H1 (cell line): ENCODE measurements at regions of chr16 and their contacts with region 1.

Region 1: GRCh38 chr16:57470683-57471082 is 8.2 kb downstream of the POLR2C start:
- DNase-seq: no peak
- H3K4me3 ChIP-seq: no peak overlapping the region
- H3K27ac ChIP-seq: 0 out of 2 replicates have a peak overlapping the region, but pooled peaks have one; percentile 19
- H3K4me1 ChIP-seq: peaks cover 5 to 30% (median 24%) of the 10 kb centered on the region in 4 experiments
- H3K27me3 ChIP-seq: no peaks in the 10 kb centered on the region
- CTCF ChIP-seq: no peak
- EP300 ChIP-seq: no peak
- POLR2A ChIP-seq: no peak
- RAD21 ChIP-seq: no peak

Region 2: DNA sequence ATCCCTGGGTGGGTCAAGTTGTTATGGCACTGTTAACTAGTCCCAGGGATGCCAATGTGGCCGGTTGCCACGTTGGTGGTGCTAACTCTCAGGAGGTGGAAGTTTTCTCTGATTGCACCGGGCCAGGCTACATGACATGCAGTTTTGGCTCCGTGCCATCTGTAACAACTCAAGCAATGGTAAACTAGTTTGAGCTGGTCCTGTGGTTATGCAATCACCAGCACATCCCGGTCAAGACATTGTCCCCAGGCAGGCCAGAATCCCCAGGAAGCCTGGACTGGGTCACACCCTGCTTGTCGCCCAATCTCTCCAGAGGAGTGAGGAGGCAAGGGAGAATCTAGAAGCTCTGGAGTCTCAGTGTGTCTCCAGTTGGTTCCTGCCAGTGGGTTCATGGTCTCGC is 76.2 kb before region 1 on chr16:
- CTCF ChIA-PET with region 1: no interaction called
- POLR2A ChIA-PET with region 1: no interaction called
- DNase-seq: no peak
- H3K4me3 ChIP-seq: no peak overlapping the region
- H3K27ac ChIP-seq: no peak overlapping the region
- H3K4me1 ChIP-seq: no peaks in the 10 kb centered on the region
- H3K27me3 ChIP-seq: no peaks in the 10 kb centered on the region
- CTCF ChIP-seq: no peak
- EP300 ChIP-seq: no peak
- POLR2A ChIP-seq: no peak
- RAD21 ChIP-seq: no peak

Region 3: DNA sequence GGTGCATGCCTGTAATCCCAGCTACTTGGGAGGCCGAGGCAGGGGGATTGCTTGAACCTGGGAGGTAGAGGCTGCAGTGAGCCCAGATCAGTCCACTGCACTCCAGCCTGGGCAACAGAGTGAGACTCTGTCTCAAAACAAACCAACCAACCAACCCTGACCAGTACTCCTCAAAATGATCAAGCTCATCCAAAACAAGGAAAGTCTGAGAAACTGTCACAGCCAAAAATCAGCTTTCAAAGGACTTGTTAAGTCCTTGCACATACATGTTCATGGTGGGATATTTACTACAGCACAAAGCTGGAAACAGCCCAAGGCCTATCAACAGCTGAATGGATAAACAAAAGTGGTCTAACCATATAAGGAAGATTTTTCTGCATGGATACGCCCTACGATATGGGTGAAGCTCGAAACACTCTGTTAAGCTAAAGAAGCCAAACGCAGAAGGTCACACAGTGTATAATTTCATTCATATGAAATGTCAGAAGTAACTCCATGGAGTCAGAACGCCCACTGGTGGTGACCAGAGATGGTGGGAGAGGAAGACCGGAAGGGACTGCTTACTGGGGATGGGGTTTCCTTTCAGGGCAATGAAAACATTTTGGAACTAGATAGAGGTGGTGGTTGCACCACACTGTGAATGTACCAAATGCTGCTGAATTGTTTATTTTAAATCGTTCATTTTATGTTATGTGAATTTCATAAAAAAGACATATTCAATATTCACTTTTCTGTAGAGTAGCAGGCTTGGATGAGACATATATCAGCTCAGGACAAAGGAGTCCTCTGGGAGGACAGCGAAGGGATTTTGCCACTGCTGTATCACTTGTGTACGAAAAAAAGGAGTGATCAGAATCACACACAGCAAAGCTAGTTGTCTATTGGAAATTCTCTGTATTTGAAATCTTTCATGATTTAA is 48.4 kb before region 1 on chr16:
- CTCF ChIA-PET with region 1: interaction called, 10 read pairs
- POLR2A ChIA-PET with region 1: interaction called, 7 read pairs
- DNase-seq: peak in 1 of 2 experiments; percentile 60
- H3K4me3 ChIP-seq: no peak overlapping the region
- H3K27ac ChIP-seq: no peak overlapping the region
- H3K4me1 ChIP-seq: peaks cover 0 to 5% (median 1%) of the 10 kb centered on the region in 4 experiments; a peak in 3 of 7 replicates
- H3K27me3 ChIP-seq: no peaks in the 10 kb centered on the region
- CTCF ChIP-seq: peak; percentile 56 to 73 (median 61)
- EP300 ChIP-seq: no peak
- POLR2A ChIP-seq: no peak
- RAD21 ChIP-seq: peak; percentile 71 to 77